CD8-positive, alpha-beta memory T cell (primary cell): ENCODE measurements at regions of chr16 and their contacts with region 1.

Region 1: GRCh38 chr16:28218104-28218503 is 6.3 kb upstream of the XPO6 start:
- DNase-seq: peak; percentile 40 to 79 (median 64)
- H3K4me3 ChIP-seq: no peak overlapping the region
- H3K4me3 Mint-ChIP-seq: peak overlapping the region in 1 of 7 donors; percentile 28
- H3K27ac ChIP-seq: no peak overlapping the region
- H3K27ac Mint-ChIP-seq: peak overlapping the region in 3 of 8 donors; percentile 48 to 72 (median 54)
- H3K4me1 ChIP-seq: no peaks in the 10 kb centered on the region
- H3K4me1 Mint-ChIP-seq: peaks cover 4 to 6% (median 5%) of the 10 kb centered on the region in 3 donors
- H3K27me3 ChIP-seq: no peaks in the 10 kb centered on the region
- H3K27me3 Mint-ChIP-seq: no peaks in the 10 kb centered on the region

Region 2: GRCh38 chr16:28003923-28004322 is 214.2 kb before region 1 on chr16:
- CTCF ChIA-PET with region 1: no interaction called
- POLR2A ChIA-PET with region 1: no interaction called
- DNase-seq: no peak
- H3K4me3 ChIP-seq: no peak overlapping the region
- H3K4me3 Mint-ChIP-seq: no peak overlapping the region
- H3K27ac ChIP-seq: no peak overlapping the region
- H3K27ac Mint-ChIP-seq: no peak overlapping the region
- H3K4me1 ChIP-seq: no peaks in the 10 kb centered on the region
- H3K4me1 Mint-ChIP-seq: no peaks in the 10 kb centered on the region
- H3K27me3 ChIP-seq: no peaks in the 10 kb centered on the region
- H3K27me3 Mint-ChIP-seq: peaks cover 7 to 9% of the 10 kb centered on the region in 2 donors

Region 3: DNA sequence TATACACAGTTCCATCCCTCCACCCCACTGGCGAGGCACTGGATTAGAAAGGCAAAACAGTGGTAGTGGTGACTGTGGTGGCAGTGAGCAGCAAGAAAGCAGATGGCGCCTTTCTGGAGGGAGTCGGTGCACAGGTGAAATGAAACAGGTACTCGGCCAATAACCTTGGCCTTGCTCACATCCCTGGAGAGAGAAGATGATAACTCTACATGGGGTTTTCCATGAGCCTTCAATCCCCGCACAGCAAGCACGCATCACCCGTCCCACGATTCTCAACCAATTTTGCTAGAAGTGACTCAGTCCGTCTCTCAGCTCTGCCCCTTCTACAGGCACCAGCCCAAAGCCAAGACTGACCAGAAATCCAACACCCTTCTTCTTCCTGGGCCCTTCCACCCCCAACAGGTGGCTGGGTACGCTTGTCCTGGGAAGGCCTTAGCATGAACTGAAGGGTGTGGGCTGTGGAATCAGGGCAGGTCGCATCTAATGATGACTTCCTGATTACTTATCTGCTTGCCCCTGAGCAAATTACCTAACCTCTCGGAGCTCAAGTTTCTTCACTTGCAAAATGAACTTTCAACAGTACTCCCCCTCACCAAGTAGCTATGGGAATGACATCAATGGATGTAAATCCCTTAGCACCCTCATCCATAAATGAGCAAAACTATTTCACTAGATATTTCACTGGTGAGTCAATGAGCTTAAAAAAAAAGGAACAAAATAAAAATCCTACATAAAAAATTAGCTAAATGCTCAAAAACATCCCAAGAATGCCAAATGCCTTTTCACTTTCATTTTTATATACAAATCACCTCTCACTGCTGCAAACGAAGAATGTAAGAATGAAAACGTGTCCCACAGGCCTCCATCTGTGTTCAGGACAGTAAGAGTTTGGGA is 24.3 kb before region 1 on chr16:
- CTCF ChIA-PET with region 1: interaction called, 16 read pairs
- POLR2A ChIA-PET with region 1: no interaction called
- DNase-seq: peak in 4 of 5 donors; percentile 13 to 54 (median 21)
- H3K4me3 ChIP-seq: peak overlapping the region; percentile 52
- H3K4me3 Mint-ChIP-seq: peak overlapping the region; percentile 47 to 86 (median 81)
- H3K27ac ChIP-seq: peak overlapping the region; percentile 69
- H3K27ac Mint-ChIP-seq: peak overlapping the region; percentile 97 to 99 (median 98)
- H3K4me1 ChIP-seq: peaks cover 68% of the 10 kb centered on the region
- H3K4me1 Mint-ChIP-seq: peaks cover 78 to 95% (median 82%) of the 10 kb centered on the region in 3 donors
- H3K27me3 ChIP-seq: no peaks in the 10 kb centered on the region
- H3K27me3 Mint-ChIP-seq: peaks cover 0 to under 1% of the 10 kb centered on the region in 2 donors

Region 4: DNA sequence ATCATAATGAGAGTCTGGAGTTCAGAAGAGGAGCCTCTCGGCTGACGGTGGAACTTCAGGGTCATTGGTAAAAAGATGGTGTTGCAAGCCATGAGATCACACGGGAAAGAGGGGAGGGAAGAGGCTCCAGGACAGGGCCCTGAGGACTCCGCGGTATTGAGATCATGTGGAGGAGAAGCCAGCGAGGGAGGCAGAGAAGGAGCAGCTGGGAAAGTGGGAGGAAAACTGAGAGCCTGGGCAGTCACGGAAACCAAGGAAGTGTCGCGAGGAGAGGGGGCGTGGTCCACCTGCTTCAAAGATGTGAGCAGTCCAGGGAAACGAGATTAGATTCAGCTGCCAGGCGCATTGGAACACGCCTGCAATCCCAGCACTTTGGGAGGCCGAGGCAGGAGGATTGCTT is 46.6 kb after region 1 on chr16:
- CTCF ChIA-PET with region 1: no interaction called
- POLR2A ChIA-PET with region 1: no interaction called
- DNase-seq: no peak
- H3K4me3 ChIP-seq: no peak overlapping the region
- H3K4me3 Mint-ChIP-seq: no peak overlapping the region
- H3K27ac ChIP-seq: no peak overlapping the region
- H3K27ac Mint-ChIP-seq: no peak overlapping the region
- H3K4me1 ChIP-seq: peaks cover 14% of the 10 kb centered on the region
- H3K4me1 Mint-ChIP-seq: peaks cover 13 to 23% (median 21%) of the 10 kb centered on the region in 3 donors
- H3K27me3 ChIP-seq: no peaks in the 10 kb centered on the region
- H3K27me3 Mint-ChIP-seq: peaks cover 11 to 31% of the 10 kb centered on the region in 2 donors